Caco-2 (cell line): ENCODE measurements at regions of chr13 and their contacts with region 1.

Region 1: GRCh38 chr13:109275852-109276251 is 510.5 kb downstream of the IRS2 start:
- DNase-seq: peak; percentile 63 to 70
- H3K4me3 ChIP-seq: no peak overlapping the region
- H3K4me3 Mint-ChIP-seq: peak overlapping the region; percentile 29
- H3K27ac Mint-ChIP-seq: peak overlapping the region; percentile 44
- H3K4me1 ChIP-seq: peaks cover 57% of the 10 kb centered on the region
- H3K4me1 Mint-ChIP-seq: peaks cover 40% of the 10 kb centered on the region
- H3K27me3 ChIP-seq: no peaks in the 10 kb centered on the region
- H3K27me3 Mint-ChIP-seq: no peaks in the 10 kb centered on the region
- CTCF ChIP-seq: peak in 1 of 2 experiments; percentile 45

Region 2: DNA sequence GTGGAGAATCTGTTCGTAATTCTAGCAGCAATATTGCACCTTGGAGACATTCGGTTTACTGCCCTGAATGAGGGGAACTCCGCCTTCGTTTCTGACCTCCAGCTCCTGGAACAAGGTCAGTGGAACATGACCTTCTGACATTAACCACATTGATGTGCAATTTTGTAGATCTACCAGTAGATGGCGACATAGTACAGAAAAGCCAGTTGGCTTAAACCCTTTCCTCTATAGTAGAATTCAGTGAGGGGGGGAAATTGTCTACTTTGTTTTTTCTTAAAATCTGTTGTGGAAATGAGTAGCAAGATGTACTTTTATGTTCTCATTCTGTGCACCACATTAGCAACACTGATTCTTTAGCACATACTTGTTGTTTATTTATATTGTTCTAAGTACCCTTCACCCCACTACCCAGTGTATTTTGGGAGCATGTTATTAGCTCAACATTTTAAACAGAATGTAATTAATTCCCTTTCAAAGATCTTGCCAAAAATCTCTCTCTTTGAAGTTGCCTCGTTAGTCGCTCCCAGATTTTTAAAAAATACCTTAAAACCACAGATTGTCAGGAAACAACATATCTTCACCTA is 314.2 kb before region 1 on chr13:
- CTCF ChIA-PET with region 1: no interaction called
- POLR2A ChIA-PET with region 1: no interaction called
- intact Hi-C with region 1: no loop called
- DNase-seq: peak in 1 of 2 experiments; percentile 48
- H3K4me3 ChIP-seq: no peak overlapping the region
- H3K4me3 Mint-ChIP-seq: no peak overlapping the region
- H3K27ac Mint-ChIP-seq: no peak overlapping the region
- H3K4me1 ChIP-seq: no peaks in the 10 kb centered on the region
- H3K4me1 Mint-ChIP-seq: peaks cover 15% of the 10 kb centered on the region
- H3K27me3 ChIP-seq: no peaks in the 10 kb centered on the region
- H3K27me3 Mint-ChIP-seq: no peaks in the 10 kb centered on the region
- CTCF ChIP-seq: peak; percentile 78 to 87

Region 3: DNA sequence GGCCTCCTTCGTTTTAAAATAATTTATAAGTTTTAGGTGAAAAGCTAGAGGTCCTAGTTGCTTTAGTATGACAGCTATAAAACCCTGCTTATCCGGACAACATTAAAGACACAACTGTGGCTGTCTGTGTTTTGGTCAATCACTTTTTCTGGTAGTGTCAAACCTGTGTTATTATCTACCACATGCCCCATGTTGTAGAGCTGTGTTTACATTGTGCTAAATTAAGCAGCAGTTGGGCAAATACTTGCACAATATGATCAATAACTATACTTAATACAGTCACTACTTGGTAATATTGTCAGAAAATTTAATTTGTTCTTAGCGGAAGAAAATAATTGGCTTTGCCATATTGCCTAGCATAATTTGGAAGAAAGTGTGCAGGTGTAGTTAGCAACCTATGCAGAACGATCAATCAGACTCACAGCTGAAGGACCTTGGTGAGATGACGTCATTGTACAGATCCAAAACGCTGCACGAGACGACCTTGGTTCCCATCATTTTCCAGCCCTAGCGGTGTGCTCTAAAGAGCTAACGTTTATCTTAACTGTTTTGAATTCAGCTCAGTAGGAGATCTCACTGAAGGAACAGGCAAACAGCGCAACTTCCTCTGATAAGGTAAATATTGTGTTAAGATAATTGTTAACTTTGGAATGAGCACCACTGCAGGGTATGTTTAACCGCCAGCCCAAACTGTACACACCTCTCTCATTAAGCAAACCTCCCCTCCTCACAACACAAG is 33.9 kb after region 1 on chr13:
- CTCF ChIA-PET with region 1: no interaction called
- POLR2A ChIA-PET with region 1: no interaction called
- intact Hi-C with region 1: loop called (anchors 2 kb)
- DNase-seq: peak; percentile 57
- H3K4me3 ChIP-seq: no peak overlapping the region
- H3K4me3 Mint-ChIP-seq: no peak overlapping the region
- H3K27ac Mint-ChIP-seq: no peak overlapping the region
- H3K4me1 ChIP-seq: peaks cover 12% of the 10 kb centered on the region
- H3K4me1 Mint-ChIP-seq: peaks cover 7% of the 10 kb centered on the region
- H3K27me3 ChIP-seq: no peaks in the 10 kb centered on the region
- H3K27me3 Mint-ChIP-seq: no peaks in the 10 kb centered on the region
- CTCF ChIP-seq: no peak

Region 4: GRCh38 chr13:109326601-109327000 is 50.7 kb after region 1 on chr13:
- CTCF ChIA-PET with region 1: no interaction called
- POLR2A ChIA-PET with region 1: no interaction called
- intact Hi-C with region 1: loop called (anchors 5 kb)
- DNase-seq: no peak
- H3K4me3 ChIP-seq: no peak overlapping the region
- H3K4me3 Mint-ChIP-seq: no peak overlapping the region
- H3K27ac Mint-ChIP-seq: no peak overlapping the region
- H3K4me1 ChIP-seq: peaks cover 18% of the 10 kb centered on the region
- H3K4me1 Mint-ChIP-seq: peaks cover 15% of the 10 kb centered on the region
- H3K27me3 ChIP-seq: no peaks in the 10 kb centered on the region
- H3K27me3 Mint-ChIP-seq: no peaks in the 10 kb centered on the region
- CTCF ChIP-seq: no peak